Adrenal gland (tissue), 19 donors: ENCODE measurements at regions of chr13 and their contacts with region 1.

Region 1: GRCh38 chr13:24693862-24694471 is 13.8 kb downstream of the ATP12A start:
- DNase-seq: peak; percentile 28 to 71 (median 55)
- H3K4me3 ChIP-seq: no peak overlapping the region
- H3K27ac ChIP-seq: no peak overlapping the region
- H3K4me1 ChIP-seq: no peaks in the 10 kb centered on the region
- H3K27me3 ChIP-seq: peaks cover 6% of the 10 kb centered on the region
- CTCF ChIP-seq: peak; percentile 53 to 66 (median 60)
- POLR2A ChIP-seq: no peak

Region 2: GRCh38 chr13:24557081-24557480 is 136.9 kb before region 1 on chr13:
- intact Hi-C with region 1: no loop called
- DNase-seq: no peak
- H3K4me3 ChIP-seq: no peak overlapping the region
- H3K27ac ChIP-seq: no peak overlapping the region
- H3K4me1 ChIP-seq: no peaks in the 10 kb centered on the region
- H3K27me3 ChIP-seq: no peaks in the 10 kb centered on the region
- CTCF ChIP-seq: no peak
- POLR2A ChIP-seq: no peak

Region 3: GRCh38 chr13:24727731-24728601 is 34.0 kb after region 1 on chr13:
- intact Hi-C with region 1: loop called in 1 of 2 experiments (anchors 5 kb)
- DNase-seq: peak; percentile 56 to 86 (median 77)
- H3K4me3 ChIP-seq: no peak overlapping the region
- H3K27ac ChIP-seq: no peak overlapping the region
- H3K4me1 ChIP-seq: no peaks in the 10 kb centered on the region
- H3K27me3 ChIP-seq: no peaks in the 10 kb centered on the region
- CTCF ChIP-seq: peak; percentile 73 to 98 (median 76)
- POLR2A ChIP-seq: no peak